ENCODE measurements at regions of chr4 and their contacts with region 1.

Region 1: DNA sequence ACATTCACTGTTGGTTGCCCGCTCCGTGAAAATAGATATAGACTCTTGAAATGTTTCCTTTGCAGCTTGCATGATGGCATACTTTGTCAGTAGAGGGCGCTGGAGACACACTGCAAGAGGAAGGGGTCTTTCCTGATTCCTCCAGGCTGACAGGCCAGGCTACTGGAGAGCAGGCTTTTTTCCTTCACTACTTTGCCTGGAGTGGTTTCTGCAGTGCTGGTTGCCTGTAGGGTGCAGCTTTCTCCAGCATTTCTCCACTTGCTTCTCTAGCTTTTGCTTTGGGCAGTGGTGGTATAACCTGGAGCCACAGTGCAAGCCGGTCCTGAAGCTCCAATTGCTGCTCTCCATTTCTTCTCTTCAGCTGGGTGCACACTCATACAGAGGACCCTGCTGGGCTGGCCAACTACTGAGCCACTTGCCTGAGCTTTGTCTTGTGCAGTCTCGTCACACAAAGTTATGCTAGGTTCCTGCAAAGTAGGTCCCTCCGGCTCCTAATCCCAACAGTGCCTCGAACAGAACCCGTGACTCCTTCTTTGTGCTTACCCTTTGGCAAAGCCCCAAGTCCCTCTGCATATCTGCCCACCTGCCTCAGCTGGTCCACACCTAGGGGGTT is 46.3 kb downstream of the RASSF6 start:
- DNase-seq: peak; percentile 51
- ATAC-seq: peak; percentile 91
- H3K4me3 ChIP-seq: no peak overlapping the region
- H3K27ac ChIP-seq: no peak overlapping the region
- H3K4me1 ChIP-seq: no peaks in the 10 kb centered on the region; the same call in 1 of the 2 replicates
- H3K27me3 ChIP-seq: no peaks in the 10 kb centered on the region
- CTCF ChIP-seq: peak; percentile 93 to 96 (median 93)
- EP300 ChIP-seq: no peak
- POLR2A ChIP-seq: no peak
- RAD21 ChIP-seq: peak; percentile 97

Region 2: GRCh38 chr4:72938516-72938915 is 635.4 kb before region 1 on chr4:
- CTCF ChIA-PET with region 1: no interaction called
- POLR2A ChIA-PET with region 1: no interaction called
- RAD21 ChIA-PET with region 1: no interaction called
- SMC1A ChIA-PET with region 1: no interaction called
- in situ Hi-C with region 1: no loop called
- intact Hi-C with region 1: no loop called
- DNase-seq: no peak
- ATAC-seq: no peak
- H3K4me3 ChIP-seq: no peak overlapping the region
- H3K27ac ChIP-seq: no peak overlapping the region
- H3K4me1 ChIP-seq: no peaks in the 10 kb centered on the region
- H3K27me3 ChIP-seq: no peaks in the 10 kb centered on the region
- CTCF ChIP-seq: no peak
- EP300 ChIP-seq: no peak
- POLR2A ChIP-seq: no peak
- RAD21 ChIP-seq: no peak

Region 3: DNA sequence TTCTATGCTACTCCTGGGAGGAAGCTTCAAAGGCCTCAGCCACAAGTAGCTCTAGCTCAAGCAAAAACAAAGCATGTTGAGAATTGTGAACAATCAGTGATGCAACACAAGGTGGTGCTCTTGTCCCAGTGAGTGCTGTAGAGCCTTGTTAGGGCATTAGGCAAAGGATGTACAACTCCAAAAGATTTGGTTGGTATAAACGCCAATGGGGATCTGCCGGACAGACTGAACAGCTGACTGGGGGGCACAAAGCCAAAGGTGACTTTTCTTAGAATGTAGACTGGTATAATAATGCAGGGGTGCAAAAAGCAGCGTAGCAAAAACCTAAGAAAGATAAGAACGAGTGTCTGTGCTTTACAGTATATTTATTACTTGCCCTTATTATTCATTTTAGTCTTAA is 232.4 kb before region 1 on chr4:
- CTCF ChIA-PET with region 1: interaction called, 15 read pairs
- POLR2A ChIA-PET with region 1: no interaction called
- RAD21 ChIA-PET with region 1: interaction called, 5 read pairs
- SMC1A ChIA-PET with region 1: interaction called, 5 read pairs
- in situ Hi-C with region 1: no loop called
- intact Hi-C with region 1: loop called (anchors 5 kb)
- DNase-seq: peak; percentile 16
- ATAC-seq: peak; percentile 90
- H3K4me3 ChIP-seq: no peak overlapping the region
- H3K27ac ChIP-seq: no peak overlapping the region
- H3K4me1 ChIP-seq: no peaks in the 10 kb centered on the region
- H3K27me3 ChIP-seq: no peaks in the 10 kb centered on the region
- CTCF ChIP-seq: peak; percentile 44 to 71 (median 57); a peak in 4 of 6 replicates
- EP300 ChIP-seq: no peak
- POLR2A ChIP-seq: no peak
- RAD21 ChIP-seq: peak; percentile 82

Region 4: GRCh38 chr4:73593631-73594241 is 19.8 kb after region 1 on chr4:
- CTCF ChIA-PET with region 1: interaction called, 84 read pairs
- POLR2A ChIA-PET with region 1: interaction called, 6 read pairs
- RAD21 ChIA-PET with region 1: interaction called, 62 read pairs
- SMC1A ChIA-PET with region 1: interaction called, 67 read pairs
- in situ Hi-C with region 1: no loop called
- intact Hi-C with region 1: loop called (anchors 1 kb)
- DNase-seq: no peak
- ATAC-seq: no peak
- H3K4me3 ChIP-seq: no peak overlapping the region
- H3K27ac ChIP-seq: no peak overlapping the region
- H3K4me1 ChIP-seq: peaks cover 23% of the 10 kb centered on the region
- H3K27me3 ChIP-seq: no peaks in the 10 kb centered on the region
- CTCF ChIP-seq: peak; percentile 43 to 49 (median 48); a peak in 5 of 6 replicates
- EP300 ChIP-seq: no peak
- POLR2A ChIP-seq: no peak
- RAD21 ChIP-seq: peak; percentile 59

Region 5: DNA sequence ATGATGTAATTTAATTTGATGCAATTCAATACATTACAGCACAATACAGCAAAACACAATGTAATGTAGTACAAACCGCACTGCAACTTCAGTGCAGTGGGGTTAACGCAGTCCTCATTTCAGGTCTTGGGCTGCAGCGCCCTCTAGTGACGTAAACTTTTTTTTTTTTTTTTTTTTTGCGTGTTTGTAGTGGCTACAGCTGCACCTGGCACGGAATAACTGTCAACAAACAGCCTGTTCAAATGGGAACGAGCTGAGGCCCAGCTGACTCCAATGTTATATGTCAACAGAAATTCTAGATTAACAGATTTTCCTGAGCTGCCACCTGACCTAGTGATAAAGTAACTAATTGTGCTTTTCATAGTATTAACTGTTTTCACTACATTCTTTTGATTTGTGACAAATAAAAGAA is 79.8 kb after region 1 on chr4:
- CTCF ChIA-PET with region 1: interaction called, 361 read pairs
- POLR2A ChIA-PET with region 1: interaction called, 5 read pairs
- RAD21 ChIA-PET with region 1: interaction called, 311 read pairs
- SMC1A ChIA-PET with region 1: interaction called, 302 read pairs
- in situ Hi-C with region 1: loop called (anchors 5 kb)
- intact Hi-C with region 1: loop called (anchors 1 kb)
- DNase-seq: peak; percentile 43
- ATAC-seq: peak; percentile 91
- H3K4me3 ChIP-seq: no peak overlapping the region
- H3K27ac ChIP-seq: no peak overlapping the region
- H3K4me1 ChIP-seq: no peaks in the 10 kb centered on the region
- H3K27me3 ChIP-seq: no peaks in the 10 kb centered on the region
- CTCF ChIP-seq: peak; percentile 45 to 62 (median 45); a peak in 4 of 6 replicates
- EP300 ChIP-seq: peak in 1 of 2 experiments; percentile 58; a peak in 1 of 4 replicates
- POLR2A ChIP-seq: no peak
- RAD21 ChIP-seq: peak; percentile 90

Region 6: GRCh38 chr4:73676861-73677323 is 103.0 kb after region 1 on chr4:
- CTCF ChIA-PET with region 1: interaction called, 13 read pairs
- POLR2A ChIA-PET with region 1: no interaction called
- RAD21 ChIA-PET with region 1: interaction called, 4 read pairs
- SMC1A ChIA-PET with region 1: interaction called, 4 read pairs
- in situ Hi-C with region 1: no loop called
- intact Hi-C with region 1: no loop called
- DNase-seq: peak; percentile 19
- ATAC-seq: peak; percentile 81
- H3K4me3 ChIP-seq: no peak overlapping the region
- H3K27ac ChIP-seq: no peak overlapping the region
- H3K4me1 ChIP-seq: no peaks in the 10 kb centered on the region
- H3K27me3 ChIP-seq: no peaks in the 10 kb centered on the region
- CTCF ChIP-seq: no peak
- EP300 ChIP-seq: no peak
- POLR2A ChIP-seq: no peak
- RAD21 ChIP-seq: no peak

Region 7: DNA sequence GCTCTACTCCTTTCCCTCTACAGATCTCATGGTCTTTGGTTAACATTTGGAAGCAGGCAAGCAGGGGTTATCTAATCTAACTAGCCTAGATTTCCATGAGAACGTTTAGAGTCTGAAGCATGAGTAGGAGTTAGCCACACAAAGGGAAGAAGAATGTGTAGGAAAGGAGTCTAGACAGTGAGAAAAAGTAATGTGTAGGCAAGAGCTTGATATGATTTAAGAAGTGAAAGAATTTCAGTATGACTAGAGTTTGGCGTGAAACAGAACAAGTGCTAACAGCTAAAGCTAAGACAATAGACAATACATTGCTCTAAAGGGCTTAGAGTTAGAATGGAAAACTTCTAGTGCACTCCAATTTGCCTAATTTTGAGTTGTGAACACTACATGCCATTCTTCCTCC is 177.3 kb after region 1 on chr4:
- CTCF ChIA-PET with region 1: no interaction called
- POLR2A ChIA-PET with region 1: no interaction called
- RAD21 ChIA-PET with region 1: no interaction called
- SMC1A ChIA-PET with region 1: no interaction called
- in situ Hi-C with region 1: no loop called
- intact Hi-C with region 1: no loop called
- DNase-seq: peak; percentile 28
- ATAC-seq: peak; percentile 91
- H3K4me3 ChIP-seq: no peak overlapping the region
- H3K27ac ChIP-seq: no peak overlapping the region
- H3K4me1 ChIP-seq: no peaks in the 10 kb centered on the region
- H3K27me3 ChIP-seq: no peaks in the 10 kb centered on the region
- CTCF ChIP-seq: no peak
- EP300 ChIP-seq: peak; percentile 20 to 60; a peak in 3 of 4 replicates
- POLR2A ChIP-seq: no peak
- RAD21 ChIP-seq: no peak